ENCODE measurements at regions of chr3 and their contacts with region 1.

Region 1: GRCh38 chr3:14124615-14125190 is at the starts of genes CHCHD4 and TMEM43:
- DNase-seq: peak; percentile 92
- ATAC-seq: peak; percentile 86
- H3K4me3 Mint-ChIP-seq: peak within 1 kb of the TSS; percentile 94
- H3K27ac Mint-ChIP-seq: peak within 1 kb of the TSS; percentile 87
- H3K4me1 Mint-ChIP-seq: peaks cover 40% of the 10 kb centered on the region
- H3K27me3 Mint-ChIP-seq: no peaks in the 10 kb centered on the region
- CTCF ChIP-seq: no peak
- total RNA-seq, gene CHCHD4: 9.2 and 9.8 TPM in 2 replicates
- total RNA-seq, gene TMEM43: 30.7 and 32.3 TPM in 2 replicates

Region 2: DNA sequence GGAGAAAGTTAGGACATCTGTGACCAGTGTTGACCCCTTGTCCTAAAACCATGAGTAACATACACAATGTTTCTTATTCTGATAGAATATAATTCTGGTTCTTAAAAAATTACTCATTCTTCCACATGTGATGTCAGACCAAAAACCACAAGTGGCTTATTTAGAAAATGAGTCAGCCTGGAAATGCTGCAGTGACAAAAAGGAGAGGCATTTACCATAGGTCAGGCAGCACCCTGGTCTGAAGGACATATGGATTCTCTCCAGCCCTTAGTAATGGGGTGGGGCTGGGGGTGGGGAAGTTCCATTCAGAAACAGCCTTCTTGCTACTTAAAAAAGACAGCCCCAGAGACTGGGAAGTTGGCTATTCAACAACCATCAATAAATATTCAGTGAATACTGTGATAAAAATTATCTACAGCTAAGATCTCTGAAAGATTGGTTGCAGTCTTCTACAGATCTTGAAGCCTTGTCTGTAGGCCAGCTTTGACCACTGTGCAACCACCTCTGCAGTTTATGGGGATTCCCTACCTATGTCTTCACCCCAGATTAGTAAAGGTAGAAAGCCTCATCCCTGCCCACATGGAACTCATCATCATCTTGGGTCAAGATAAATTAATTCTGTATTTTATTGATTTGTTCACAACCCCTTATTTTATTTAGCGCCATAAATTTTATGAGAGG is 1931.1 kb before region 1 on chr3:
- CTCF ChIA-PET with region 1: no interaction called
- POLR2A ChIA-PET with region 1: no interaction called
- intact Hi-C with region 1: no loop called
- DNase-seq: no peak
- ATAC-seq: peak; percentile 48
- H3K4me3 Mint-ChIP-seq: no peak overlapping the region
- H3K27ac Mint-ChIP-seq: peak overlapping the region; percentile 37
- H3K4me1 Mint-ChIP-seq: peaks cover 13% of the 10 kb centered on the region
- H3K27me3 Mint-ChIP-seq: no peaks in the 10 kb centered on the region
- CTCF ChIP-seq: no peak

Region 3: GRCh38 chr3:13149330-13150108 is 975.2 kb before region 1 on chr3:
- CTCF ChIA-PET with region 1: no interaction called
- POLR2A ChIA-PET with region 1: no interaction called
- intact Hi-C with region 1: no loop called
- DNase-seq: no peak
- ATAC-seq: no peak
- H3K4me3 Mint-ChIP-seq: peak overlapping the region; percentile 78
- H3K27ac Mint-ChIP-seq: no peak overlapping the region
- H3K4me1 Mint-ChIP-seq: peaks cover 8% of the 10 kb centered on the region
- H3K27me3 Mint-ChIP-seq: peaks cover 3% of the 10 kb centered on the region
- CTCF ChIP-seq: no peak

Region 4: GRCh38 chr3:13648060-13649001 is 476.4 kb before region 1 on chr3:
- CTCF ChIA-PET with region 1: no interaction called
- POLR2A ChIA-PET with region 1: no interaction called
- intact Hi-C with region 1: loop called (anchors 10 kb)
- DNase-seq: peak; percentile 77
- ATAC-seq: peak; percentile 63
- H3K4me3 Mint-ChIP-seq: no peak overlapping the region
- H3K27ac Mint-ChIP-seq: no peak overlapping the region
- H3K4me1 Mint-ChIP-seq: peaks cover 18% of the 10 kb centered on the region
- H3K27me3 Mint-ChIP-seq: peaks cover 46% of the 10 kb centered on the region
- CTCF ChIP-seq: peak; percentile 98

Region 5: DNA sequence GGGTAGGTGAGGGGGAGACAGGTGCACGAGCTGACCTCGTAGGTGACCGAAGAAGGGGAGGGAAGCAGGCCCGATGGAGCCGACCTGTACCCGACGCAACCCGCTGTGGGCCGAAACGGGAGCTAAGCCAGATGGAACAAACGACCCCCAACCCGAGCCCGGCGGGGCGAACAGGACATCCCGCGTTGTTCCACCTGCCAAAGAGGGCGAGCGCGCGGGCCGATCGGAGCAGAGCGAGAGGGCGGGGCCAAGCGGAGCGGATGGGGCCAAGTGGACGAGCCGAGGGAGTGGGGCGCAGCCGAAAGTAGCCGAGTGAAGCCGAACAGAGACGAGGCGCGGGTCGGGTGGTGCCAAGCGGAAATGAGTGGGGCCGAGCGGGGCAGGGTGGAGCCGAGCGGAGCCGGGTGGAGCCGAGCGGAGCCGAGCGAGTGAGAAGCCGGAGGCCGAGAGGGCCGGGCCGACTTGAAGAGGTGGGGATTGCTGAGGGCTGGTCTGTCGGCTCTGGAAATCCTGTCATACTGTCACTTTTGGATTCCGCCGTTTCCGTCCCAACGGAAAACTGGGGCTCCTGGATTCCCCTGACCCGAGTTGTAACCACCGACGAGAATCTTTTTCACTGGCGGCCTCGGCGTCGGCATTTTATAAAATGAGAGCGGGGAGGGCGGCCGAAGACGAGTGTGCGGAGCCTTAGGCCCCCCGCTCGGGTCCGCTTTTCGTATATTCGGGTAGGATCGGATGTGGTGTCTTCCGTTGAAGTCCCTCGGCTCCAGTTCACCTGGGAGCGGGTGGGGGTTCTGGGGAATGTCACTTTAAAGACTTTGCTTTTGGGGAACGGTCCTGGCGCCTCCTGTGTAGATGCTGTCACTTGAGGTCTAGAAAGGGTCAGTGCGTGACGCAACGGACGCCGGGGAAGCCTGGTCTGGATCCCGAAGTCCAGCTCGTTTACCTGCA is 229.3 kb before region 1 on chr3:
- CTCF ChIA-PET with region 1: interaction called, 12 read pairs
- POLR2A ChIA-PET with region 1: interaction called, 4 read pairs
- intact Hi-C with region 1: loop called (anchors 1 kb)
- DNase-seq: peak; percentile 86
- ATAC-seq: peak; percentile 99
- H3K4me3 Mint-ChIP-seq: peak overlapping the region; percentile 89
- H3K27ac Mint-ChIP-seq: peak overlapping the region; percentile 78
- H3K4me1 Mint-ChIP-seq: peaks cover 41% of the 10 kb centered on the region
- H3K27me3 Mint-ChIP-seq: peaks cover 5% of the 10 kb centered on the region
- CTCF ChIP-seq: no peak

Region 6: GRCh38 chr3:14144423-14145075 is 19.8 kb after region 1 on chr3:
- CTCF ChIA-PET with region 1: no interaction called
- POLR2A ChIA-PET with region 1: interaction called, 16 read pairs
- intact Hi-C with region 1: loop called (anchors 1 kb)
- DNase-seq: peak; percentile 33
- ATAC-seq: peak; percentile 89
- H3K4me3 Mint-ChIP-seq: peak overlapping the region; percentile 57
- H3K27ac Mint-ChIP-seq: peak overlapping the region; percentile 96
- H3K4me1 Mint-ChIP-seq: peaks cover 20% of the 10 kb centered on the region
- H3K27me3 Mint-ChIP-seq: no peaks in the 10 kb centered on the region
- CTCF ChIP-seq: no peak

Region 7: GRCh38 chr3:14289590-14290461 is 165.1 kb after region 1 on chr3:
- CTCF ChIA-PET with region 1: no interaction called
- POLR2A ChIA-PET with region 1: no interaction called
- intact Hi-C with region 1: no loop called
- DNase-seq: no peak
- ATAC-seq: no peak
- H3K4me3 Mint-ChIP-seq: no peak overlapping the region
- H3K27ac Mint-ChIP-seq: no peak overlapping the region
- H3K4me1 Mint-ChIP-seq: no peaks in the 10 kb centered on the region
- H3K27me3 Mint-ChIP-seq: peaks cover 7% of the 10 kb centered on the region
- CTCF ChIP-seq: no peak

Region 8: DNA sequence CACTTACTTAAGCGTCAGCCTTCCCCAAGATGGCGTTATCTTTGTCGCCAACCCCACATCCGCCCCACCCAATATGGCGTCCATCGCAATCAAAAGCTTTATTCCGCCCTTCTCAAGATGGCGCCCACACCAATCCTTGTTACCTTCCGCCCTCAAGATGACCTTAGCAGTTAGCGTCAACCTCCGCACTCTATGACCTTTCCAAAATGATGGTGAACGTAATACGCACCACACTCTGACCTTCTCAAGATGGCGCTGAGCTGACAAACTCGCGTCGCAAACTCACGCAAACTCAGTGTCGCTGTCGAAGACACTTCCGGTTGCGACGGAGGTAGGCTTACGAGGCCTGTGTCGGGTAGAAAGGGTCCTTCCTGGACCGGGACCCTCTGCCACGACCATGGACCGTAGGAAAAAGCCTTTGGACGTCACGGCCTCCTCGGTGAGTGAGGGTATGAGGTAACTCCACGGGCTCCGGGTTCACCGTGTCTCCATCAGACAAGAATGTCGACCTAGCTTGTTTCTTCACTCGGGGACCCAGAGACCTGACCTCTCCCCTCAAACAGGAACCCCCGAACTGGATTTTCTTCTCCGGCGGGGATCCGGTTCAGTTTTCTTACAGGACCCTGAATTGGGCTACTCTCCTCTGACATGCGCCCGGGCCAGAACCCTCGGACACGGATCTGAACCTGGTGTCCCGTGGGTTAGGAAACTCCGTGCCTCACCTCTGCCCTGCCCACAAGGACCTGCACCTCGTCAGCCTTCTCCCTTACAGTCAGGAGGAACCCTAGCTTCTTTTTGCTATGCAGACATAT is 526.9 kb after region 1 on chr3 and contains the start of gene CCDC174:
- CTCF ChIA-PET with region 1: no interaction called
- POLR2A ChIA-PET with region 1: interaction called, 24 read pairs
- intact Hi-C with region 1: no loop called
- DNase-seq: peak; percentile 86
- ATAC-seq: peak; percentile 97
- H3K4me3 Mint-ChIP-seq: peak within 1 kb of the TSS; percentile 95
- H3K27ac Mint-ChIP-seq: peak within 1 kb of the TSS; percentile 93
- H3K4me1 Mint-ChIP-seq: peaks cover 34% of the 10 kb centered on the region
- H3K27me3 Mint-ChIP-seq: no peaks in the 10 kb centered on the region
- CTCF ChIP-seq: no peak
- total RNA-seq, gene CCDC174: 30.2 and 32.4 TPM in 2 replicates

Region 9: DNA sequence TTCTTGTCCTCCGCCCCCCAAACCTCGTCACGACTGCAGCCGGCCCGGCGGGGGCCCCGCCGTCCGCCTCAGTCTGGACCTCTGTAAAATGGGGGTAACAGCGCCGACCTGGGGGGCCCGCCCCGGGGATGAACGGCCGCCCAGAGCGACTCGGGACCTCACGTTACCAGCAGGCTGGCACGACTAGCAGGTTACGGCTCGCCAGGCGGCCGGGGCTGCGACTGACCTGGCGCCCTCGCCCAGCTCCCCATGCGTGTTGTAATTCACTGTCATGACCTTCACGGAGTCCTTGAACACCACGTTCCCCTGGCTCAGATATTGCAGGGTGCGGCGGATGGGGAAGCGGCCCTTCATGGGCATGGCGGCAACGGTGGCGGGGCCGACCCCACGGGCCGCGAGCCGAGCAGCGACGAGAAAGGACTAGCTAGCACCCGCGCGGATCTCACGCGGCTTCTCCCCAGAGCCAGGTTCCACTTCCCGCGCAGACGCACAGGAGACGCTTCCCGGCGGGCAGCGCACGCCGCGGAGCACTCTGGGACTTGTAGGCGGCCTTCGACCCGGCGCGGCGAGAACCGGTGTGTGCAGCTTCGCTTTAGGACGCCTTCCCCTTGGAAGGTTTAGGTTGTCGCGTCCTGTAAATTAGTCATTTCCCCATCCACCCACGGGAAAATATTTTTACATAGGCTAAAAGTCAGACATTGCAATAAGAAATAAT is 940.3 kb after region 1 on chr3 and contains the start of gene MRPS25:
- CTCF ChIA-PET with region 1: no interaction called
- POLR2A ChIA-PET with region 1: interaction called, 3 read pairs
- intact Hi-C with region 1: loop called (anchors 1 kb)
- DNase-seq: peak; percentile 84
- ATAC-seq: peak; percentile 97
- H3K4me3 Mint-ChIP-seq: peak within 1 kb of the TSS; percentile 98
- H3K27ac Mint-ChIP-seq: peak within 1 kb of the TSS; percentile 95
- H3K4me1 Mint-ChIP-seq: peaks cover 25% of the 10 kb centered on the region
- H3K27me3 Mint-ChIP-seq: no peaks in the 10 kb centered on the region
- CTCF ChIP-seq: no peak
- total RNA-seq, gene MRPS25: 72.4 and 85.9 TPM in 2 replicates